A673 (cell line): ENCODE measurements at regions of chr1 and their contacts with region 1.

Region 1: GRCh38 chr1:36099681-36100341 is 11.1 kb downstream of the ADPRS start:
- DNase-seq: peak; percentile 82
- H3K4me3 ChIP-seq: no peak overlapping the region
- H3K27ac ChIP-seq: no peak overlapping the region
- H3K4me1 ChIP-seq: peaks cover 7% of the 10 kb centered on the region
- H3K27me3 ChIP-seq: no peaks in the 10 kb centered on the region
- CTCF ChIP-seq: peak; percentile 92

Region 2: GRCh38 chr1:36134505-36135329 is 34.9 kb after region 1 on chr1:
- CTCF ChIA-PET with region 1: interaction called, 5 read pairs
- POLR2A ChIA-PET with region 1: no interaction called
- intact Hi-C with region 1: loop called (anchors 5 kb)
- DNase-seq: no peak
- H3K4me3 ChIP-seq: no peak overlapping the region
- H3K27ac ChIP-seq: peak overlapping the region; percentile 55
- H3K4me1 ChIP-seq: peaks cover 10% of the 10 kb centered on the region
- H3K27me3 ChIP-seq: no peaks in the 10 kb centered on the region
- CTCF ChIP-seq: peak; percentile 76

Region 3: DNA sequence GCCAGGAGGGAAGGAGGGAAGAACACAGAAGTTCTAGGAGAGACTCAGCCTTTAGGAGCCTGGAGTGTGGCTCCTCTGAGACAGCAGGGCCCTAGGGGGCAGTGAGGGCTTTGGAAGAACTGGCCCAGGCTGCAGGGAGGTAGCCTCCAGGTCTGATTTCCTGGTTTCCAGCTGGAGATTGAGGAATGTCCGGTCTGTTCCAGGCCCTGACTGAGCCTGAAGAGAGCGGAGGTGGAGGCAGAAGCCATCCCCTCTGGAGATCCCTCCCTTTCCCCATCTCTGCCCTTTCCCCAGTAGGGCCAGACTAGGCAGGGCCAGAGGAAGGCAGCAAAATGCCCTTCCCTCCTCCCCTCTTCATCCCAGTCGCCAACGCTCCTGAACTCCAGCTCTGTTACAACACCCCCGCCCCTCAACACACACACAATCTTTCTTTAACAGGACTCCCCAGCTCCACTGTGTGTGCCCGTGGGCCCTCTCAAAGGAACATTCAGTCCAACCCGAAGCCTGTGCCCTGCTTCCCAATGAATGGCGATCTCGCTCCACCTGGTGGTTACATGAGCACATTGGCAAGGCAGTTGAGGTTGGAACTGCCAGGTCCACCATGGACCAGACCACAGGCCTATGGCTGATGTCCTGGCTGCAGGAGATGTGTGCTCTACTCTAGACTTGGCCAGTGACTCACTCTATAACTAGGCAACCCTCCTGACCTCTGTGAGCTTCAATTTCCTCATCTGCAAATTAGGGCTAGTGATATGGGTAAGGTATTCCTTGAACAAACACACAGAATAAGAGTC is 88.2 kb after region 1 on chr1:
- CTCF ChIA-PET with region 1: interaction called, 3 read pairs
- POLR2A ChIA-PET with region 1: interaction called, 3 read pairs
- intact Hi-C with region 1: loop called (anchors 5 kb)
- DNase-seq: peak; percentile 91
- H3K4me3 ChIP-seq: no peak overlapping the region
- H3K27ac ChIP-seq: no peak overlapping the region
- H3K4me1 ChIP-seq: no peaks in the 10 kb centered on the region
- H3K27me3 ChIP-seq: no peaks in the 10 kb centered on the region
- CTCF ChIP-seq: peak; percentile 91

Region 4: GRCh38 chr1:36257375-36257767 is 157.6 kb after region 1 on chr1:
- CTCF ChIA-PET with region 1: no interaction called
- POLR2A ChIA-PET with region 1: no interaction called
- intact Hi-C with region 1: no loop called
- DNase-seq: no peak
- H3K4me3 ChIP-seq: no peak overlapping the region
- H3K27ac ChIP-seq: no peak overlapping the region
- H3K4me1 ChIP-seq: peaks cover 36% of the 10 kb centered on the region
- H3K27me3 ChIP-seq: no peaks in the 10 kb centered on the region
- CTCF ChIP-seq: no peak

Region 5: GRCh38 chr1:36285448-36286101 is 185.8 kb after region 1 on chr1:
- CTCF ChIA-PET with region 1: interaction called, 3 read pairs
- POLR2A ChIA-PET with region 1: no interaction called
- intact Hi-C with region 1: loop called (anchors 2 kb)
- DNase-seq: peak; percentile 85
- H3K4me3 ChIP-seq: no peak overlapping the region
- H3K27ac ChIP-seq: no peak overlapping the region
- H3K4me1 ChIP-seq: peaks cover 21% of the 10 kb centered on the region
- H3K27me3 ChIP-seq: no peaks in the 10 kb centered on the region
- CTCF ChIP-seq: peak; percentile 82

Region 6: GRCh38 chr1:36369061-36369861 is 269.4 kb after region 1 on chr1:
- CTCF ChIA-PET with region 1: no interaction called
- POLR2A ChIA-PET with region 1: no interaction called
- intact Hi-C with region 1: loop called (anchors 2 kb)
- DNase-seq: peak; percentile 86
- H3K4me3 ChIP-seq: no peak overlapping the region
- H3K27ac ChIP-seq: peak overlapping the region; percentile 51
- H3K4me1 ChIP-seq: peaks cover 53% of the 10 kb centered on the region
- H3K27me3 ChIP-seq: no peaks in the 10 kb centered on the region
- CTCF ChIP-seq: peak; percentile 91

Region 7: GRCh38 chr1:36420836-36421664 is 321.2 kb after region 1 on chr1:
- CTCF ChIA-PET with region 1: no interaction called
- POLR2A ChIA-PET with region 1: no interaction called
- intact Hi-C with region 1: loop called (anchors 1 kb)
- DNase-seq: peak; percentile 90
- H3K4me3 ChIP-seq: no peak overlapping the region
- H3K27ac ChIP-seq: no peak overlapping the region
- H3K4me1 ChIP-seq: peaks cover 5% of the 10 kb centered on the region
- H3K27me3 ChIP-seq: no peaks in the 10 kb centered on the region
- CTCF ChIP-seq: peak; percentile 94